Activated CD4-positive, alpha-beta T cell treated with anti-CD3 and anti-CD28 coated beads for 36 hours (primary cell): ENCODE measurements at regions of chr6 and their contacts with region 1.

Region 1: DNA sequence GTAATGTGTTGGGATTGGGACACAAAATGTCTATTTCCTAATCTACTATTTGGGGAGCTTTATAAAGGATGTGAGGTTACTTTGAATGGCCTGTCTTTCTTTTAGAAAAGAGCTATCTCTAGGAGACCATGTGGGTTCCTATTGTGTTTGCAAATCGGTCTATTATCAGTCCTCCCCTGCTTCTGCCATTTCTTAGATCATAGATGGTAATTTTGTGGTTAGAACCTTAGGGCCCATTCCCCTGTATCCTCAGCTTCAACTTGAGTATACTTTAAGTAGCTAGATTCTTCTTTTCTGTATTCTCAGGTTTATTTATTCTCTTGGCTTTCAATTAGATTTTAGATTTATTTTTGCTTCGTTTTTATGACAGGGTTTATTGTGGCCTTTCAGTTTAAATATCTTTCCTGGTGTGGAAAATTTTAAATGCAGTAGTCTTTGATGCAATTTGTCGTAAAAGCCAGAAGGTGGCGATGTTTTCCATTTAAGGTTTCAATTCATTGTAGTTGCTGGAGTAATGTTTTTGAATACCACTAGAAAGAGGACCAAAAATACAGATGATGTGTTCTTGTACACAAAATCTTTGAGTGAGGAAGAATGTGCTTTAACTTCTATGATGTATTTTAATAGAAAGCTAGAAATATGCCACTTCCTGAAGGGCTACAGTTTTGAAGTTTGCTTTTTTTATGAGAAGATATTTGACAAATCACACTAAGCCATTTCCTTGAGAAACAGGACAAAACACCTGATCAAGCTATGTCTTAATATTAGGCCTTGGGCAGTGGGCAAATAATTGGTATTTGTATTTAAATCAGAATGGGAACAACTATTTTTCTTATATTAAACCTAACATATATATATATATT is 20.3 kb downstream of the TBPL1 start:
- DNase-seq: no peak
- ATAC-seq: peak; percentile 61
- H3K4me3 Mint-ChIP-seq: no peak overlapping the region
- H3K27ac Mint-ChIP-seq: no peak overlapping the region
- H3K4me1 Mint-ChIP-seq: peaks cover 31% of the 10 kb centered on the region
- H3K27me3 Mint-ChIP-seq: no peaks in the 10 kb centered on the region

Region 2: DNA sequence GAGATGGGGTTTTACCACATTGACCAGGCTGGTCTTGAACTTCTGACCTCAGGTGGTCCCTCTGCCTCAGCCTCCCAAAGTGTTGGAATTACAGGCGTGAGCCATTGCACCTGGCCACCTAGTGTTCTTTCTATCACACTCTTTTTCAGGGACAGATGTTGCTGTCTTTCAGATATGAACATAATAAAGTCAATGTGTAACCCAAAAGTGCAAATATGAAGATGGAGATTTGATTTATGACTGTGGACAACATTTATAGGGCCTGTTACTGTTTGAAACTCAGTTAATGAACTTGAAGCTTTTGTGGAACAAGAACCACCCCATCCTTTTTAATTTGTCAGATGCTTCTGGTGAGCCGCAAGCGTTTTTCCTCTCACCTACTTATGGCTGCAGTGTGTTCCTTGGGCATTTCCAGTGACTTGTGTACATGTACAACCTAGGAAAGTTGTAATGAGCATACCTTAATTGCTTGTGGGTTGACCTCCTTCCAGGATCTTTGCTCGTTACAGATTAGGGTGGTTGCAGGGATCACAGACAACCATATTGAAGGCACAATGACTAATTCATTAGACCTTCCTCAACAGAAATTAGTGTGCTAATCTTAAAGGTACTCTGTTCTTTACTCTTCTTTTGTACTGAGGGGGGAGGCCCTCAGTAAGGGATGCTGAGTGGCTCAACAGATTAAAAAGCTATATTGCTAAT is 13.5 kb before region 1 on chr6:
- CTCF ChIA-PET with region 1: interaction called, 30 read pairs
- POLR2A ChIA-PET with region 1: interaction called, 3 read pairs
- intact Hi-C with region 1: no loop called
- DNase-seq: no peak
- ATAC-seq: no peak
- H3K4me3 Mint-ChIP-seq: no peak overlapping the region
- H3K27ac Mint-ChIP-seq: peak overlapping the region; percentile 45
- H3K4me1 Mint-ChIP-seq: peaks cover 76% of the 10 kb centered on the region
- H3K27me3 Mint-ChIP-seq: no peaks in the 10 kb centered on the region

Region 3: DNA sequence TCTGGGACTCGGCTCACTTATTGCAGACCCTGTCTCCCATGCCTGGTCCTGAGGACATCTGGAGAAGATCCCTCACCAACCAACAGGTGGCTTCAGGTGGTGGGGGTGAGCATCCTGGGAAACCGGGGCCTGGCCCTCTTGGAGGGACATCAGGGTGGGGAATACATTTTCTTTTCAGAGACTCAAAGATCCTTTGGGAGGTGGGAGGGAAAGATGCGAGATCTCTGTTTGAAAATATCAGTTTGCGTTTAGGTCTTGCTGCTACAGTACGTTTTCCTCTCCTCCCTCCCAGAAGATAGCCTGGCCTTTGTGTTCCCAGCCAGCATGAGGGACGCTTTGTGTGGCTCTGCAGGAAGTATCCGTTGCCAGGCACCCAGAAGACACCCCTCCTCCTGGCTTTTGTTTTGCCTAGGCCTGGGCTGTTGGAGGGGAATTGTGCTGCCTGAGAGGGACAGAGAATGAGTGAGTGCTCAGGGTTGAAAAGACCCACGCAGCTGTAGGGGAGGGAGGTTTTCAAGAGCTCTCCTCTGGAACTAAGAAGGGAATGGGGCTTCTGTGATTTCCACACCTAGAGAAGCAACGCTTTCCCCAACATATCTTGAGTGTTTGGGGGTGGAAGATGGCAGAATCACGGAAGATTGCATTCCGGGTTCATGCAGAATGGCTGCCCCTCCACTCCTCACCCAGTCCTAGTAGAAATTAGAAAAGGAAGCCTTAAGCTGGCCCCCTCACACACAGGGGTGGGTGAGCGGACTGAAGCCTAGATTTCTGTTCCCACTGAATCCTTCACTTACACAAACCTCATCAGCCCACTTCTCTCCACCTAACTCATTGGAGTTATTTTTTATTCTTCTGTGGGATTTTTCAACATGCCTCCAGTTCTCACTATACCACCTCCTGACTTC is 101.1 kb after region 1 on chr6:
- CTCF ChIA-PET with region 1: interaction called, 10 read pairs
- POLR2A ChIA-PET with region 1: no interaction called
- intact Hi-C with region 1: no loop called
- DNase-seq: no peak
- ATAC-seq: no peak
- H3K4me3 Mint-ChIP-seq: no peak overlapping the region
- H3K27ac Mint-ChIP-seq: no peak overlapping the region
- H3K4me1 Mint-ChIP-seq: no peaks in the 10 kb centered on the region
- H3K27me3 Mint-ChIP-seq: no peaks in the 10 kb centered on the region